HAP-1 (cell line): ENCODE measurements at regions of chr6 and their contacts with region 1.

Region 1: GRCh38 chr6:127539272-127539671 is 20.1 kb upstream of the MTCL3 start:
- DNase-seq: peak in 1 of 2 experiments; percentile 14
- H3K4me3 ChIP-seq: no peak overlapping the region
- H3K4me1 ChIP-seq: no peaks in the 10 kb centered on the region; the same call in 1 of the 2 replicates
- H3K27me3 ChIP-seq: peaks cover 4% of the 10 kb centered on the region

Region 2: GRCh38 chr6:127302728-127303660 is 236.3 kb before region 1 on chr6:
- in situ Hi-C with region 1: loop called (anchors 25 kb)
- DNase-seq: peak; percentile 49 to 53
- H3K4me3 ChIP-seq: no peak overlapping the region
- H3K4me1 ChIP-seq: peaks cover 4% of the 10 kb centered on the region; the same call in 1 of the 2 replicates
- H3K27me3 ChIP-seq: no peaks in the 10 kb centered on the region

Region 3: GRCh38 chr6:127464881-127465459 is 74.3 kb before region 1 on chr6:
- in situ Hi-C with region 1: loop called (anchors 5 kb)
- DNase-seq: peak; percentile 76 to 88
- H3K4me3 ChIP-seq: no peak overlapping the region
- H3K4me1 ChIP-seq: no peaks in the 10 kb centered on the region
- H3K27me3 ChIP-seq: no peaks in the 10 kb centered on the region